MCF 10A (cell line): ENCODE measurements at regions of chr9 and their contacts with region 1.

Region 1: GRCh38 chr9:132507746-132508469 is 74.5 kb upstream of the BARHL1 start:
- DNase-seq: peak; percentile 65
- H3K4me3 Mint-ChIP-seq: no peak overlapping the region
- H3K27ac Mint-ChIP-seq: no peak overlapping the region
- H3K4me1 Mint-ChIP-seq: no peaks in the 10 kb centered on the region
- H3K27me3 Mint-ChIP-seq: peaks cover 62% of the 10 kb centered on the region
- CTCF ChIP-seq: peak; percentile 73

Region 2: DNA sequence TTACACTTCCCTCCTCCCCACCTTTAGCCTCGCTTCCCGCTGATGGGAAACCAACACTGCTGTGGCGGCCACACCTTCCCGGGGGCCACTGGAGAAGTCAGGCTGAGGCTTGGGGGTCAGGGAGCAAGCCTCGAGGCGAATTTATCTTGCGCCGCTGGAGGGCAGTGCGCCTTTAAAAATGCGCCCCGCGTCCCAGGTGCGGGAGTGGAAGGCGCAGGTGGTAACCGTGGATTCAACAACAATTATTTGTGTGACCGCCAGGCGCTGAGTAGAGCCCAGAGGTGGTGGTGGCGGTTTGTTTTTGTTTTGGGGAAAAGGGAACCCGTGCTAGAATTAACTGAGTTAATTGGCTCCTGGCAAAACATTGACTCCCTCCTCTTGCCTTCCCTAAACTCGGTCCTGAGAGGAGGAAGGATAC is 96.8 kb before region 1 on chr9:
- CTCF ChIA-PET with region 1: interaction called, 5 read pairs
- POLR2A ChIA-PET with region 1: interaction called, 3 read pairs
- intact Hi-C with region 1: loop called (anchors 2 kb)
- DNase-seq: peak; percentile 64
- H3K4me3 Mint-ChIP-seq: peak overlapping the region; percentile 46
- H3K27ac Mint-ChIP-seq: no peak overlapping the region
- H3K4me1 Mint-ChIP-seq: peaks cover 12% of the 10 kb centered on the region
- H3K27me3 Mint-ChIP-seq: peaks cover 37% of the 10 kb centered on the region
- CTCF ChIP-seq: peak; percentile 77

Region 3: DNA sequence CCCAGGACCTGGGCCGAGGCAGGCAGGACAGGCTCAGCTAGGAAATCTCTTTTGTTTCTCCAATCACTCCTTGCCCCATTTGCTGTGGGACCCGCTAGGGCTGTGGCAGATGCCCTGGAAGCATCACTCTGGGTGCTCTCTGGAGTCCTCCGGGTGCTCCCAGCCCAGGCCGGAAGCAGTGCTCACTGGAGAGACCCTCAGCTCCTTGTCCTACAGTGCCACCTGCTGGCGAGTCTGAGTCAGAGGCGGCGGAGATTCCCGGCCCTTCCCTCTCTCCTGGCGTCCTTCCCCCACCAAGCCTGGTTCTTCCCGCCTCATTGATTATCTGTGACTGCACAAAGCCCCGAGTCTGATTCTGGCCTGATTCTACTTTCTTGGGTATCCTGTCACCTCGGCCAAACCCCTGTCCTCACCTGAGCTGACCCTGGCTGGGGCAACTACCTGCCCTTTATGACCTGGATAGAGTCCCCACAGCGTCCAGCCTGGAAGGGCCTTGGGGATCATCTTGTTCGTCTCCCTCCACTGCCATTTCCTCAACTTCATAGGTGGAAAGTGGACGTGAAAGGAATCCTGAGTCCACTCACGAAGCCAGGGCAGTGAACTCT is 67.2 kb after region 1 on chr9:
- CTCF ChIA-PET with region 1: interaction called, 13 read pairs
- POLR2A ChIA-PET with region 1: no interaction called
- intact Hi-C with region 1: loop called (anchors 1 kb)
- DNase-seq: peak; percentile 73
- H3K4me3 Mint-ChIP-seq: no peak overlapping the region
- H3K27ac Mint-ChIP-seq: no peak overlapping the region
- H3K4me1 Mint-ChIP-seq: peaks cover 5% of the 10 kb centered on the region
- H3K27me3 Mint-ChIP-seq: peaks cover 78% of the 10 kb centered on the region
- CTCF ChIP-seq: peak; percentile 81

Region 4: GRCh38 chr9:132651254-132651653 is 143.3 kb after region 1 on chr9:
- CTCF ChIA-PET with region 1: interaction called, 6 read pairs
- POLR2A ChIA-PET with region 1: no interaction called
- intact Hi-C with region 1: loop called (anchors 1 kb)
- DNase-seq: peak; percentile 86
- H3K4me3 Mint-ChIP-seq: peak overlapping the region; percentile 16
- H3K27ac Mint-ChIP-seq: no peak overlapping the region
- H3K4me1 Mint-ChIP-seq: peaks cover 7% of the 10 kb centered on the region
- H3K27me3 Mint-ChIP-seq: no peaks in the 10 kb centered on the region
- CTCF ChIP-seq: peak; percentile 42

Region 5: GRCh38 chr9:133004999-133005760 is 497.3 kb after region 1 on chr9:
- CTCF ChIA-PET with region 1: no interaction called
- POLR2A ChIA-PET with region 1: no interaction called
- intact Hi-C with region 1: no loop called
- DNase-seq: no peak
- H3K4me3 Mint-ChIP-seq: no peak overlapping the region
- H3K27ac Mint-ChIP-seq: no peak overlapping the region
- H3K4me1 Mint-ChIP-seq: peaks cover 9% of the 10 kb centered on the region
- H3K27me3 Mint-ChIP-seq: peaks cover 22% of the 10 kb centered on the region
- CTCF ChIP-seq: no peak